ENCODE measurements at regions of chr18 and their contacts with region 1.

Region 1: DNA sequence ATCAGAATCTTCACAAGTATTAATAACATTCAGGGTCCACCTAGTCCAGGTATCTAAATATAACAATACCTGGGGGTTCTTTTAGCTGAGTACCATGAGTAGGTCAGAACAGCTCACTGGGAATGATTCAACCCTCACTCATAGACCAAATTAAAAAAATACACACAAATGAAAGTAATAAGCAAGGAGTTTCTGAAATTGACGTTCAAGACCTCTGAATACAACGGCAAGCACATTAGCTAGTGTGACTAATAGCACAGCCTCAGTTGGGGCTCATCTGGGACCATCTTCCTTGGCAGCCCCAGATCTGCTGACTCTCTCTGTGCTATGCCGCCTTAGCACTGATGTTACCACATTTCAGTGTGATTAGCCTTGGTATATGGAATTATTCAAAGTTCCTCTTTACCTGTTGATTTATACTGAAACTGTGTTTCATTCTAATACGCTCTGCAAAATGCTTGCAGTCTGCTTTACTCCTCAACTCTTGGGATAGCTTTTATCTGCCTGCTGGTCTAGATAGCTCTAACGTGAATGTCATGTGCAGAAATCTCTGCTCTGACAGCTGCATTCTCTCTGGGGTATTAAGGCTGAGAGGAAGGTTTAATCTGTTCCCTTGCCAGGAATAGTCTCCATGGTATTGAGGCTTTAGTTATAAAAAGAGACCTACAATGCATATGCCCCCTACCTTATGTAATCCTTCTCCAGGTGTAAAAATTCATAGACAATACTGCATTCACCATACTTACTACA is 153.3 kb downstream of the METTL4 start:
- DNase-seq: no peak
- H3K4me3 ChIP-seq: no peak overlapping the region
- H3K27ac ChIP-seq: no peak overlapping the region
- H3K4me1 ChIP-seq: no peaks in the 10 kb centered on the region
- H3K27me3 ChIP-seq: no peaks in the 10 kb centered on the region
- CTCF ChIP-seq: no peak
- EP300 ChIP-seq: no peak
- POLR2A ChIP-seq: no peak

Region 2: GRCh38 chr18:3703732-3704176 is 1285.7 kb after region 1 on chr18:
- intact Hi-C with region 1: loop called in 1 of 4 experiments (anchors 5 kb)
- DNase-seq: peak; percentile 33 to 66 (median 60)
- H3K4me3 ChIP-seq: no peak overlapping the region
- H3K27ac ChIP-seq: no peak overlapping the region
- H3K4me1 ChIP-seq: peaks cover 1% of the 10 kb centered on the region
- H3K27me3 ChIP-seq: no peaks in the 10 kb centered on the region
- CTCF ChIP-seq: peak in 2 of 3 donors; percentile 14 to 39
- EP300 ChIP-seq: no peak
- POLR2A ChIP-seq: no peak